Mammary epithelial cell (primary cell): ENCODE measurements at regions of chr4 and their contacts with region 1.

Region 1: GRCh38 chr4:106369456-106370060 is 980 bp upstream of the GIMD1 start:
- DNase-seq: peak; percentile 50
- H3K4me3 ChIP-seq: no peak overlapping the region
- H3K27ac ChIP-seq: no peak overlapping the region
- H3K4me1 ChIP-seq: peaks cover 12% of the 10 kb centered on the region
- H3K27me3 ChIP-seq: no peaks in the 10 kb centered on the region
- CTCF ChIP-seq: peak; percentile 71 to 76

Region 2: GRCh38 chr4:106329041-106329618 is 40.4 kb before region 1 on chr4:
- CTCF ChIA-PET with region 1: interaction called, 7 read pairs
- dilution Hi-C with region 1: no loop called
- in situ Hi-C with region 1: no loop called
- intact Hi-C with region 1: loop called (anchors 5 kb)
- DNase-seq: peak; percentile 40
- H3K4me3 ChIP-seq: no peak overlapping the region
- H3K27ac ChIP-seq: no peak overlapping the region
- H3K4me1 ChIP-seq: no peaks in the 10 kb centered on the region
- H3K27me3 ChIP-seq: no peaks in the 10 kb centered on the region
- CTCF ChIP-seq: peak; percentile 68 to 89

Region 3: GRCh38 chr4:106583567-106583966 is 214.0 kb after region 1 on chr4:
- CTCF ChIA-PET with region 1: interaction called, 3 read pairs
- dilution Hi-C with region 1: no loop called
- in situ Hi-C with region 1: no loop called
- intact Hi-C with region 1: loop called (anchors 5 kb)
- DNase-seq: peak; percentile 97
- H3K4me3 ChIP-seq: no peak overlapping the region
- H3K27ac ChIP-seq: peak overlapping the region; percentile 90
- H3K4me1 ChIP-seq: peaks cover 54% of the 10 kb centered on the region
- H3K27me3 ChIP-seq: no peaks in the 10 kb centered on the region
- CTCF ChIP-seq: no peak

Region 4: DNA sequence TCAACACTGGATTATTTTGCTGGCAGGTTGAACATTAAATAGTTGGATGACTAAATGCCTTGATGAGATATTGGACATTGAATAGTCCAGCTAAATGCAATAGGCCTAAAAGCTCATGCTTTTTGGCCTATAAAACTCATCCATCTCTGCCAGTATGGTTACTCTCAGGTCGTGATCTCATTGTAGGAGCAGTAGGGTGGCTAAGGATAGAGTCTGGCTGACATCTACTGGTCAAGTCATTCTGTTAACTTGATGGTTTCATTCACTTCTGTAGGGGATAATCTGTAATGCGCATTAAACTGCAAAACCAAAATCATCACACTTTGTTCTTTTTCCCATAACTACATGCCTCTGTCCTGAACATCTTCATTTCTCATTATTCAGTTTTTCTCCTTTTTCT is 439.5 kb after region 1 on chr4:
- CTCF ChIA-PET with region 1: no interaction called
- dilution Hi-C with region 1: no loop called
- in situ Hi-C with region 1: loop called (anchors 5 to 10 kb)
- intact Hi-C with region 1: loop called (anchors 1 kb)
- DNase-seq: peak; percentile 48
- H3K4me3 ChIP-seq: no peak overlapping the region
- H3K27ac ChIP-seq: no peak overlapping the region
- H3K4me1 ChIP-seq: no peaks in the 10 kb centered on the region
- H3K27me3 ChIP-seq: no peaks in the 10 kb centered on the region
- CTCF ChIP-seq: peak; percentile 50 to 71

Region 5: DNA sequence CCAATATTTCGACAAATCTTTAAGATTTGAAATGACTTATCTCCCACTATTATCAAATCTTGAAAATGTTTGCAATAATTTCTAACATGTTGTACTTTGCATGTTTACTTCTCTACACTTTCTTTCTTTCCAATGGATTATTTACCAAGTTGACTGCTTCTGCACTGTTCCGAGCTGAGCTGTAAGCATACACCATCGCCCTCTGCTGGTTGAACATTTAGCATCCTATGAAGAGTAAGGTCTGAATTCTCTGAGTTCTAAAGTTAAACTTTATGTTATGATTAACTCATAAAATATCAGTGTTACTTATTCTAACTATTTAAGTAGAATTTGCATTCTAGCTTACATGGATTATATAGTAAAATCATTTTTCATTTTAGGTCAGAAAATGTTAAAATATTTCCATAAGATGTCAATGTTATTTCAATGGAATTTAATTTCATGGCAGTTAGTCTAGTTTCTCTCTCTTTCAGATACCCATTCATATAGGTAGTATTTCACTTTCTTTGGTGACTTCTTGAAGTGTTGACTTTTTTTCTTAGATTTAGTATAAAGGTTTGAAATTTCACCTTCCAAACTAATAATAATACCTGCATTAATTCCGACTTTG is 529.2 kb after region 1 on chr4:
- CTCF ChIA-PET with region 1: interaction called, 3 read pairs
- dilution Hi-C with region 1: no loop called
- in situ Hi-C with region 1: loop called in 1 of 2 experiments (anchors 25 kb)
- intact Hi-C with region 1: loop called (anchors 1 kb)
- DNase-seq: peak; percentile 37
- H3K4me3 ChIP-seq: no peak overlapping the region
- H3K27ac ChIP-seq: no peak overlapping the region
- H3K4me1 ChIP-seq: no peaks in the 10 kb centered on the region
- H3K27me3 ChIP-seq: peaks cover 2% of the 10 kb centered on the region
- CTCF ChIP-seq: peak; percentile 87 to 95